ENCODE measurements at regions of chr19 and their contacts with region 1.

Region 1: DNA sequence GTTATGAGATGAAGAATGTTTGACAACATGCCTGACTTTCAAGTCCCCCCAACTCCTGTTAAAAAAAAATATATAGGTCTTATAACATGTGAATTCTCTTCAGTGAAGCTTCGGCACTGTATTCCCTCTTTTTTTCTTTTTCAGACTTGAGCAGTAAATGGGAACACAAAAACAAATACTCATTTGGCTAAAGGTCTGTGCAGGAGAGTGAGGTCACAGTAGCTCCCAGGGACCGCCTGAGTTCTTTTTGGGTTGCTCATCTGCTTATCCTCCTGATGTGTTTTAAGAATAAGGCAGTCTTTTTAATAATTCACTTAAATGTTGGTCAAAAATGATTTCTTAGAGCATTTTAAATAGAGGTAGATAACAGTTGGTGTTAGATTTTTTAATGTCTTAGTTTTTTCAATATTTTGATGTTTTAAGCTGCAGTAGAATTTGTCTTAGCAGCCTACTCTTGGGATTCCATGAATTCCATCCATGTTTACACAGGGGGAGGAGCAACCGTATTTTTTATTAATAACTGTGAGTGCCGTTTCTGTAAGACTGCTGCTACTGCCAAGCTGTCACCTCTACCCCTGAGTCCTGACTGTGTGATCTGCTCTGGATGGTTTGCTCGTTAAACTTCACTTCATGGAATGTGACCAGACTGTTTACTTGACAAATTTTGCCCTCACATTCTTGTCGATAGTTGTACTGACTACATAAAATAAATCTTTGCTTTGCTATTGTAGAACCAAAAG is 14.9 kb downstream of the HNRNPM start:
- DNase-seq: no peak
- H3K4me3 ChIP-seq: no peak overlapping the region
- H3K27ac ChIP-seq: no peak overlapping the region
- H3K4me1 ChIP-seq: peaks cover 8 to 14% (median 12%) of the 10 kb centered on the region in 4 experiments
- H3K27me3 ChIP-seq: no peaks in the 10 kb centered on the region
- CTCF ChIP-seq: no peak
- EP300 ChIP-seq: no peak
- POLR2A ChIP-seq: no peak
- RAD21 ChIP-seq: no peak

Region 2: GRCh38 chr19:8481201-8481600 is 21.5 kb after region 1 on chr19:
- CTCF ChIA-PET with region 1: interaction called, 10 read pairs
- POLR2A ChIA-PET with region 1: interaction called, 11 read pairs
- DNase-seq: no peak
- H3K4me3 ChIP-seq: no peak overlapping the region
- H3K27ac ChIP-seq: peak overlapping the region; percentile 60; the same call in 1 of the 2 replicates
- H3K4me1 ChIP-seq: no peaks in the 10 kb centered on the region; a peak in 1 of 7 replicates
- H3K27me3 ChIP-seq: no peaks in the 10 kb centered on the region
- CTCF ChIP-seq: no peak
- EP300 ChIP-seq: no peak
- POLR2A ChIP-seq: no peak
- RAD21 ChIP-seq: no peak

Region 3: DNA sequence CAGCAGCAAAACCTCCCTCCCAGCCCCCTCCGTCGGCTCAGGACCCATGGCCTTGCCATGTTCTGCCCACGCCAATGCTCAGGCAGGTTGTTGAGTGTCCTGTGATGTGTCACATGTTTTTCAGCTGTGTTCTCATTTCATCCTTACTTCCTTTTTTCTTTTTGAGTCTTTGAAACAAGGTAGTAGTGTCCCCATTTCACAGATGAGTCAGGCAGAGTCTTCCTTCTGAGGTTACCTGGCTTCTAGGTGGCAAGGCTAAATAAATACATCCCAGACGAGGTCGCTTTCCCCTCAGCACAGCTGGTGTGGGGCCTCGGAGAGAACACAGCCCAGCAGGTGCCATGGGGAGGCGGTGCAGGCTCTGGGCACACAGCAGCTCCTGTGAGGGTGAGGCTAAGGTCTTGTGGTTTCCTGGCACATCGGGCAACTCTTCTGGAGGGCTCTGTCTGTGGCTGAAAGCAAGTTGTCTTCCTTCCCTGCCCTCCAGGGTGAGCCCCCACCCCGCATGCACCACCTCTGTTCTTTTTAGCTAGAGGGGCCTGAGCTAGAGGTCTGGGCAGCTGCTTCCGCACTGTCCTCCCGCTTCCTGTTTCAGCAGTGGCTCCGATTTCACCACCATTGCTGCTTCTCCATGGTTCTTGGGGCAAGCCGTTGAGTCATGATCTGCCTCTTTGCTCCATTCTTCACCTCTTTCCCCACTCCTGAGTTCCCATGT is 27.6 kb after region 1 on chr19:
- CTCF ChIA-PET with region 1: interaction called, 6 read pairs
- POLR2A ChIA-PET with region 1: interaction called, 11 read pairs
- DNase-seq: no peak
- H3K4me3 ChIP-seq: no peak overlapping the region
- H3K27ac ChIP-seq: no peak overlapping the region
- H3K4me1 ChIP-seq: peaks cover 0 to 2% (median 0%) of the 10 kb centered on the region in 4 experiments; a peak in 1 of 7 replicates
- H3K27me3 ChIP-seq: no peaks in the 10 kb centered on the region
- CTCF ChIP-seq: no peak
- EP300 ChIP-seq: no peak
- POLR2A ChIP-seq: no peak
- RAD21 ChIP-seq: no peak

Measured in H1 (cell line).